Mammary epithelial cell (primary cell): ENCODE measurements at regions of chr18 and their contacts with region 1.

Region 1: GRCh38 chr18:44679056-44679905 is 1.4 kb upstream of the SETBP1 start:
- DNase-seq: peak; percentile 80
- H3K4me3 ChIP-seq: peak overlapping the region; percentile 78 to 95 (median 90)
- H3K27ac ChIP-seq: peak overlapping the region; percentile 63
- H3K4me1 ChIP-seq: peaks cover 30% of the 10 kb centered on the region
- H3K27me3 ChIP-seq: no peaks in the 10 kb centered on the region
- CTCF ChIP-seq: peak; percentile 60 to 69

Region 2: DNA sequence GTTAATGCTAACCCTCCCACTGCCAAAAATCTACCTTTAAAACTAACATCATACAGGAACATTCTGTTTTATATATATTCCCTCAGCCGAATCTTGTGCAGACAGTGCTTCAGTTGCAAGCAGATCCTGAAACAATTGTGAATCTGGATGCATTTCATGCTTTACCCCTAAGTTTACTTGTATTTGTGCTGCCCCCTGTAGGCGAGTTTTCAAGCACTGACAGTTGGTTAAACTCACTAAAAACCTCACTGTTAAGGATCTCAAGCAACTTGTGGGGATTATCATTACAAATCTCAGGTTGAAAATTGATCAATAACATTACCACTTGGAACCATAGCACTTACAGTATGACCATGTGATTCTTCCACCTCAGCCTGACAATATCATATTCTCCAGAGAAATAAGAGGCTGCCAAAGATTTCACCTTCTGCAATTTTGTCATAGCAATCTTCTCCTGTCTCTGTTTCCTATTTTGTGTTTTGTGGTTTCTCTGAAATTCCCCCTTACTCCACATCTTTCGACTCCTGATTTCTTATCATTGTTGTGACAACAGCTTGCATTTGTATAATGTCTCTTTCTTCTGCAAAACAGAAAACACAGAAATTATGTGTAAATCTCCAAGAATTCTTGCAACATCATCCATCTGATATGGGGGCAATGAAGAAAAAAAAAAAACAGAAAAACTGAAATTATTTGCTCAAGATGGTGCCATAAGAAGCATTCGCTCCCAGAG is 353.2 kb before region 1 on chr18:
- CTCF ChIA-PET with region 1: interaction called, 18 read pairs
- dilution Hi-C with region 1: no loop called
- in situ Hi-C with region 1: no loop called
- intact Hi-C with region 1: loop called (anchors 5 kb)
- DNase-seq: peak; percentile 40
- H3K4me3 ChIP-seq: no peak overlapping the region
- H3K27ac ChIP-seq: no peak overlapping the region
- H3K4me1 ChIP-seq: no peaks in the 10 kb centered on the region
- H3K27me3 ChIP-seq: no peaks in the 10 kb centered on the region
- CTCF ChIP-seq: peak; percentile 75 to 76

Region 3: GRCh38 chr18:44637210-44638051 is 41.9 kb before region 1 on chr18:
- CTCF ChIA-PET with region 1: no interaction called
- dilution Hi-C with region 1: no loop called
- in situ Hi-C with region 1: no loop called
- intact Hi-C with region 1: loop called (anchors 1 kb)
- DNase-seq: peak; percentile 86
- H3K4me3 ChIP-seq: peak overlapping the region in 2 of 3 experiments; percentile 17 to 21
- H3K27ac ChIP-seq: peak overlapping the region; percentile 78
- H3K4me1 ChIP-seq: peaks cover 24% of the 10 kb centered on the region
- H3K27me3 ChIP-seq: no peaks in the 10 kb centered on the region
- CTCF ChIP-seq: no peak

Region 4: GRCh38 chr18:44786688-44787087 is 107.4 kb after region 1 on chr18:
- CTCF ChIA-PET with region 1: no interaction called
- dilution Hi-C with region 1: no loop called
- in situ Hi-C with region 1: no loop called
- intact Hi-C with region 1: loop called (anchors 2 kb)
- DNase-seq: no peak
- H3K4me3 ChIP-seq: no peak overlapping the region
- H3K27ac ChIP-seq: no peak overlapping the region
- H3K4me1 ChIP-seq: peaks cover 18% of the 10 kb centered on the region
- H3K27me3 ChIP-seq: no peaks in the 10 kb centered on the region
- CTCF ChIP-seq: no peak

Region 5: GRCh38 chr18:45014047-45014501 is 334.8 kb after region 1 on chr18:
- CTCF ChIA-PET with region 1: interaction called, 4 read pairs
- dilution Hi-C with region 1: no loop called
- in situ Hi-C with region 1: no loop called
- intact Hi-C with region 1: loop called (anchors 5 kb)
- DNase-seq: peak; percentile 91
- H3K4me3 ChIP-seq: no peak overlapping the region
- H3K27ac ChIP-seq: no peak overlapping the region
- H3K4me1 ChIP-seq: peaks cover 48% of the 10 kb centered on the region
- H3K27me3 ChIP-seq: no peaks in the 10 kb centered on the region
- CTCF ChIP-seq: peak; percentile 30 to 42